ENCODE measurements at regions of chr7 and their contacts with region 1.

Region 1: DNA sequence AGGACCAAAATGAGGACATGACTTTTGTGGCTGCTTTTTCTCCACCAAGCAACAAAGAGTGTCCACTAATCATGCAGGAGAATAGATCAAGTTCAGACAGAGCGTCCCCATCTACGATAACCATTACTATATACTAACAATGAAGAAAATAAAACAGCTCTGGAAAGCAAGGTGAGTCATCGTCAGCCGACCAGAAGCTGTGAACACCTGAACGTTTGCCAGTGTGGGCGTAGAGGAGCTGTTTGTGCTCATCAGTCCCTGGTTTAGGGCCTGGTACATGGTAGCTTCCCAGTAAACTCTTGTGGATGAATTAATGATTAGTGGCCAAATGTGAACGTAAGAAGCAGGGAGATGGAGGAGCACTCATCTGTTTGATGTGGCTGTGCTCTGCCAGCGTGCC is 180.7 kb downstream of the EVX1 start:
- DNase-seq: peak; percentile 55 to 65
- H3K4me3 ChIP-seq: no peak overlapping the region
- H3K27ac ChIP-seq: no peak overlapping the region
- H3K4me1 ChIP-seq: peaks cover 37% of the 10 kb centered on the region
- H3K27me3 ChIP-seq: no peaks in the 10 kb centered on the region
- CTCF ChIP-seq: no peak

Region 2: DNA sequence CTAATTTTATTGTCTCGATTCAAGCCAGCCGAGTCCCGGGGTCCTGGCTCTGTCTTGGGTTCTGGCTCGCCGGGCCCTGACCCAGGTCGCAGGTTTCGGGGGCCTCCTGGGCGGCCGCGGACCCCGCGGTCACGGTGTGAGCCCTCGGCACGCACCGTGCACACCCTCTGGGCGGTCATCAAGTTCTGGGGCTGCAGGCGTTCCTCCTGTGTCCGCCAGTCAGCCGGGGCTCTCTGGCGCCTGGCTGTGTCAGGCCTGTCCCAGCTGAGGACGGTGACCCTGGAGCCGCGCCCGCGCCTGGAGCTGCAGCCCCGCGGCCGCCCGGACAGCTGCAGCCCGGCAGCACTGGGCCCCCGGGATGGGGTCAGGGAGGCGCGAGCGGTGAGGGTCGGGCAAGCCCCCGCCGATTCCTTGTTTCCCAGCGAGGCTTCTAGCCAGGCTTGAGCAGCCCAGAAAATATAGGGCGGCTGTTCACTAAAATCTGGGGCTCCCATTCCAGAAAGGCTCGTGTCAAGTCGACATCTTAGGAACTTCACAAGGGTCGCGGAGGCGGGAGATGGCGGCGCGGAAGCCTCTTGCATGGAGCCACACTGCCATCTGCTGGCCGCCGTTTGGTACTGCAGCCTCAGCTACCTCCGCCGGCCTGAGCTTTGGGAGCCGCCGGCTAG is 262.6 kb before region 1 on chr7:
- CTCF ChIA-PET with region 1: no interaction called
- POLR2A ChIA-PET with region 1: no interaction called
- intact Hi-C with region 1: no loop called
- DNase-seq: peak; percentile 70 to 88
- H3K4me3 ChIP-seq: peak overlapping the region; percentile 71
- H3K27ac ChIP-seq: no peak overlapping the region
- H3K4me1 ChIP-seq: 0 out of 2 replicates have a peak, but pooled peaks cover 3% of the 10 kb centered on the region
- H3K27me3 ChIP-seq: no peaks in the 10 kb centered on the region
- CTCF ChIP-seq: peak; percentile 100

Region 3: DNA sequence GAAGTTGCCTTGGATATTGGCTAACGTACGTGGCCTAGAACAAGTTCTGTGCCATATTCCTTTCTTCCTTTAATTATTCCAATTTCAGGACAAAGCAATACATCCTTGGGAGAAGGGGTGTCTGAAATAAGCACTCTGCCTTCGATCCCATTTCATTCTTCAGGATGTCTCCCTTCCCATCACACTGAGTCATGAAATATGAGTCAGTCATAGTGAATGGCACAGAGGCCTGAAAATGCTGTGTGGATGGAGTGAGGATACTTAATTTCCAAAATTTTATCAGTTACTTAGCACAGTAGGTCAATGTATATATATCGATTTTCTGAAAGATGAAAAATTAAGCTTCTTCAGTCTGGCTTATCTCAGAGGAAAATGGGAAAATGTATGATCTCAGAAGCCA is 161.2 kb before region 1 on chr7:
- CTCF ChIA-PET with region 1: interaction called, 5 read pairs
- POLR2A ChIA-PET with region 1: no interaction called
- intact Hi-C with region 1: loop called (anchors 5 kb)
- DNase-seq: no peak
- H3K4me3 ChIP-seq: no peak overlapping the region
- H3K27ac ChIP-seq: no peak overlapping the region
- H3K4me1 ChIP-seq: peaks cover 22% of the 10 kb centered on the region
- H3K27me3 ChIP-seq: no peaks in the 10 kb centered on the region
- CTCF ChIP-seq: no peak

Region 4: DNA sequence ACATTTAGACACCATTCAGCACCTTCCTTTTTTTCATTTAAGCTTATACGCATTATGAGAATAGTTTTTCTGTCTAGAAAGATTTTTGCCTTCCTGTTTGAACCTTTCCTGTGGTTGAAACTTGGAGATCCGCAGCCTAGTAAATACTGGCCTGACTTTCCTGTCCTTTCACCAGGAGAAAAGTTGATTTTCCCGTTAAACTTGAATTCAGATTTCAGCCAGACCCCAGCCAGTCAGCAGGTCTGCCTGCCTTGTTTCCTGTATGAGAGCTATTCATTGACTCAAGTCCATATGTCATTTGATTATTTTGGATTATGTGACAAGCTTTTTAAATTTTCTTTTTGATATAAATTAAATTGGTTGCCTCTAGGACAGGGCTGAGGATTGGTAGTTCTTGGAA is 109.2 kb before region 1 on chr7:
- CTCF ChIA-PET with region 1: no interaction called
- POLR2A ChIA-PET with region 1: no interaction called
- intact Hi-C with region 1: loop called (anchors 5 kb)
- DNase-seq: peak; percentile 57 to 85
- H3K4me3 ChIP-seq: no peak overlapping the region
- H3K27ac ChIP-seq: peak overlapping the region; percentile 37
- H3K4me1 ChIP-seq: peaks cover 22% of the 10 kb centered on the region
- H3K27me3 ChIP-seq: no peaks in the 10 kb centered on the region
- CTCF ChIP-seq: no peak

Region 5: DNA sequence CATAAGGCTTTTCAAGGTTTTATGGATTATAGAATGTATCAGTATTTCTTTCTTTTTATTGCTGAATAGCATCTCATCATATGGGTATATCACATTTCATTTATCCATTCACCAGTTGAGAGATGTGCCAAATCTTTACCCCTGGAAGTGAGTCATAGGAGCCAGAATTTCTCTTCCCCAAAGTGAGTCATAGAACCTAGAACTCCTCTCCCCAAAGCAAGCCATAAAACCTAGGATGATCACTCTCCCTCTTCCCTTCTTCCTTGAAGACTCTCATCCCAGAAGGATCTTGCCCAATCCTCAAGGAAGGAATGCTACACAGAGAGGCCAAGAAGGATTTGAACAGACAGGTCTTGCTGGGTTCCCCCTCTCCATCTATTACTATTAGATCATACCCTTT is 19.2 kb after region 1 on chr7:
- CTCF ChIA-PET with region 1: no interaction called
- POLR2A ChIA-PET with region 1: no interaction called
- intact Hi-C with region 1: no loop called
- DNase-seq: peak in 1 of 2 experiments; percentile 70
- H3K4me3 ChIP-seq: no peak overlapping the region
- H3K27ac ChIP-seq: no peak overlapping the region
- H3K4me1 ChIP-seq: no peaks in the 10 kb centered on the region
- H3K27me3 ChIP-seq: no peaks in the 10 kb centered on the region
- CTCF ChIP-seq: no peak